ENCODE measurements at regions of chr18 and their contacts with region 1.

Region 1: GRCh38 chr18:26022585-26022984 is 67.8 kb downstream of the SS18 start:
- DNase-seq: no peak
- H3K4me3 ChIP-seq: no peak overlapping the region
- H3K27ac ChIP-seq: no peak overlapping the region
- H3K4me1 ChIP-seq: no peaks in the 10 kb centered on the region
- H3K27me3 ChIP-seq: no peaks in the 10 kb centered on the region
- CTCF ChIP-seq: no peak

Region 2: DNA sequence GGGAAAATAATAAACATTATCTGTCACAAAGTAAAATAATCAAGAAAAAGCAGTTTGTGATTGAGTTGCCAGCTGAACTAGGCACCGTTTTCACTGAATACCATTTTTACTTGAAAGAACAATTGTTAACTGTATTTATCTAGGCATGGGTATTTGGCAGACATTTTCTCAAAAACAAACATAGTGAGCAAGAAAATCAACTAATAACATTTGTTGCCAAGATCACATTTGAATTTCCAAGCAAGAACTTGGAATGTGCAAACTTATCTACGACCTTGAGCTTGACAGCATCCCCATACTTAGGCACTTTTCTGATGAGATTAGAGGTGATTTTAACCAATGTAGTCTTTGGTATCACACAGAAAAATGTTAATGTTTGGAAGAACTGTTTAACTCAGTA is 51.2 kb after region 1 on chr18:
- CTCF ChIA-PET with region 1: no interaction called
- POLR2A ChIA-PET with region 1: no interaction called
- intact Hi-C with region 1: loop called (anchors 10 kb)
- DNase-seq: no peak
- H3K4me3 ChIP-seq: no peak overlapping the region
- H3K27ac ChIP-seq: no peak overlapping the region
- H3K4me1 ChIP-seq: no peaks in the 10 kb centered on the region
- H3K27me3 ChIP-seq: no peaks in the 10 kb centered on the region
- CTCF ChIP-seq: no peak

Measured in PC-9 (cell line).